ENCODE measurements at regions of chr2 and their contacts with region 1.

Region 1: GRCh38 chr2:140863713-140864112 is 1267.1 kb downstream of the LRP1B start:
- DNase-seq: no peak
- H3K4me3 ChIP-seq: no peak overlapping the region
- H3K27ac ChIP-seq: no peak overlapping the region
- H3K4me1 ChIP-seq: no peaks in the 10 kb centered on the region
- H3K27me3 ChIP-seq: no peaks in the 10 kb centered on the region
- CTCF ChIP-seq: peak; percentile 36 to 50

Region 2: GRCh38 chr2:139790807-139791752 is 1072.6 kb before region 1 on chr2:
- intact Hi-C with region 1: loop called (anchors 5 kb)
- DNase-seq: no peak
- H3K4me3 ChIP-seq: no peak overlapping the region
- H3K27ac ChIP-seq: no peak overlapping the region
- H3K4me1 ChIP-seq: no peaks in the 10 kb centered on the region
- H3K27me3 ChIP-seq: no peaks in the 10 kb centered on the region
- CTCF ChIP-seq: no peak

Region 3: DNA sequence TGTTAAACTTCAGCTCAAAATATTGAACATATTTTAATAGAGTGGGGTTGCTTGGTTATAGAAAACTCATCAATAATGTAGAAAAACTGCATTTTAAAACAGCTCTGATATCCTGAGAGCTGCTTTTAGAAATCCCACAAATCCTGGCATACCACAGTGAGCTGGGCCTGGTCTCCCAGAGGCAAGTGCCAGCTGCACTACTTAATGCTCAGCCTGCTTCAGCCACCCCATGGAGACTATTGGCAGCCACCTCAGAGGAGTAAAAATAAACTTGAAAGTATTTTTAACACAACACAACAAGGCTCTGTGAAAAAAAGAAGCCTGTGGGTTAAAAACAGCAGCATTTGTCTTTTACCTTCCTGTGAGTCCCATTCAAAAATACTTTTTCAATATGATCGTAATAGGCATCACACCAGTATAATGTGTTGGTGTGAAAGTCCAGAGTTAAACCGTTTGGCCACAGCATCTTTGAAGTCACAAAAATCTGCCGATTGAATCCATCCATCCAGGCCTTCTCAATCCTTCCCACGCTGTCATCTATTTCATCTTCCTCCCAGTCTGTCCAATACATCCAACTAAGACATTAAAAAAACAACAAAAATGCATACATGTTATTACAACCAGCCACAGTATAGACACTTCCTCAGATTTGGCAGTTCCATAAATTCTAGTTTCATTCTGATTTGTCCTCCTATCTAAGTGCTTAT is 151.8 kb after region 1 on chr2:
- intact Hi-C with region 1: no loop called
- DNase-seq: no peak
- H3K4me3 ChIP-seq: no peak overlapping the region
- H3K27ac ChIP-seq: no peak overlapping the region
- H3K4me1 ChIP-seq: peaks cover 0 to 7% (median 0%) of the 10 kb centered on the region in 4 donors
- H3K27me3 ChIP-seq: no peaks in the 10 kb centered on the region
- CTCF ChIP-seq: no peak

Measured in tibial artery (tissue), 4 donors.